ENCODE measurements at regions of chr12 and their contacts with region 1.

Region 1: DNA sequence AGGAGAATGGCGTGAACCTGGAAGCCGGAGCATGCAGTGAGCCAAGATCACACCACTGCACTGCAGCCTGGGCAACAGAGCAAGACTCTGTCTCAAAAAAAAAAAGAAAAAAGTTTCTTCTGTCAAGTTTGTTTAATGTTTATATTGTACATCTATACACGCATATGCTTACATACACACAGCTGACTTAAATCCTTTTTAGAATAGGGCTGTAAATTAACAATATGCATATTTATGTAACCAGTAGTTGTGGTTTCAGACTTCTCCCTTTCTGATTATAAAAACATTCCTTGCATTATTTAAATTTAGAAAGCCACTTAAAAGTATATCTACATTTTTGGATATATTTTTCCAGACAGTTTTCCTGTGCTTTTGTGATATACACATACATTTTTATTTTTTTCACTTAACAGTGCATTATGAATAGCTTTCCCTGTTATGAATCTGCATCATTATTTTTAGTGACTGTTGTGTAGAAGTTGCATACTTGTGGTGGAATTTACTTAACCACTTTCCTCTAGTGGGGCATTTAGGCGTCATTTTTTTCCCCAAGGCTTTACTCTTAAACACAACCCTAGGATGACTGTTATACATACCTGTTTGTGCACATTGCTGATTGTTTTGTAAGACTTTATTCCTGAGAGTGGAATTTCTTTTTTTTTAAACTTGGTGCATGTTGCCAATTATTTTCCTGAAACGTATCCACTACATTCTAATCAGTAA is 29.4 kb downstream of the POLR3B start:
- DNase-seq: no peak
- ATAC-seq: no peak

Region 2: GRCh38 chr12:106841510-106842302 is 454.7 kb after region 1 on chr12:
- intact Hi-C with region 1: loop called (anchors 10 kb)
- DNase-seq: no peak
- ATAC-seq: peak; percentile 93

Region 3: DNA sequence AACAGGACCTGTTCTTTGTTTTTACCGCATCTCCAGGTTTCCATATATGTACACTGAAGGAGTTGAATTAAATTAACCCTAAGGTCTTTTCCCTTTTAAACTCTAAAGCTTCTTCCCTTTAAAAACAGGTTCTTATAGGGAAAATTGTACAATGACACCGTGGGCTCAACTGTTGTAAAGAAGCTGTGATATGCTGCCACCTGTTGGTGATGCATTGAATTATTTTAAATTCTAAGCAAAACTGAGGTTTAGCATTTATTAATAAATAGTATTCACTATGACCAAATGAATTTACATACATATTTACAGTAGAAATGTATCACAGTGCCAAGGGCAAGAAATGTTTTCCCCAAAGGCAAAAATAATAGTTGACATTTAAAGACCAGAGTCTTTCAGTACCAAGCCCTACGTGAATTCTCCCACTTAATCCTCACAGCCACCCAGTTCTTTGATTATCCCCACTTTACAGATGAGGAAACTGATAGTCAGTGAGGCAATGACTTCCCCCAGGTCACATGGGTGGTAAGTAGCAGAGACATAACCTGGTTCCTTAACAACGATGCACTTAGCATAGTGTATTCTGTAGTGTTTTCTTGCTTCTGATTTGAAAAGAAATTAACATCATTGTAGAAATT is 533.1 kb after region 1 on chr12:
- intact Hi-C with region 1: loop called (anchors 10 kb)
- DNase-seq: no peak
- ATAC-seq: peak; percentile 44

Measured in sciatic nerve (tissue), 2 donors.